ENCODE measurements at regions of chr19 and their contacts with region 1.

Region 1: GRCh38 chr19:57559404-57560025 is at the start of gene ZNF550:
- DNase-seq: peak; percentile 96
- ATAC-seq: peak; percentile 99
- total RNA-seq, gene ZNF550: 9.5 TPM

Region 2: GRCh38 chr19:57406516-57407123 is 152.9 kb before region 1 on chr19:
- intact Hi-C with region 1: no loop called
- DNase-seq: peak; percentile 79
- ATAC-seq: peak; percentile 51

Region 3: DNA sequence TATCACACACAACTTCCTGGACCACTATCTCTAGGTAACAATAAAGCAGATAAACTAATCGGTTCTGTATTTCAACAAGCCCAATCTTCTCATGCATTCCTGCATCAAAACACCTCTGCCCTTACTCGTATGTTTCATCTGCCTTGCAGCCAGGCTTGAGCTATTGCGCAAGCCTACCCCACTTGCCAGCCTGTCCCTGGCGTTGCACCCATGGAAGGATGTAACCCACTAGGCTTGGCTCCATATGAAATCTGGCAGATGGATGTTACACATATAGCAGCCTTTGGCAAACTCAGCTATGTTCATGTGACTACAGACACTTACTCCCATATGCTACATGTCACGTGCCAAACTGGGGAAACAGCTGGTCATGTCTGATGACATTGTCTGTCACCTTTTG is 44.3 kb before region 1 on chr19:
- intact Hi-C with region 1: no loop called
- DNase-seq: no peak
- ATAC-seq: no peak

Region 4: GRCh38 chr19:57527136-57527881 is 32.2 kb before region 1 on chr19 and contains the start of gene ZNF549:
- intact Hi-C with region 1: loop called (anchors 5 kb)
- DNase-seq: peak; percentile 91
- ATAC-seq: peak; percentile 100
- total RNA-seq, gene ZNF549: 3.6 TPM

Region 5: DNA sequence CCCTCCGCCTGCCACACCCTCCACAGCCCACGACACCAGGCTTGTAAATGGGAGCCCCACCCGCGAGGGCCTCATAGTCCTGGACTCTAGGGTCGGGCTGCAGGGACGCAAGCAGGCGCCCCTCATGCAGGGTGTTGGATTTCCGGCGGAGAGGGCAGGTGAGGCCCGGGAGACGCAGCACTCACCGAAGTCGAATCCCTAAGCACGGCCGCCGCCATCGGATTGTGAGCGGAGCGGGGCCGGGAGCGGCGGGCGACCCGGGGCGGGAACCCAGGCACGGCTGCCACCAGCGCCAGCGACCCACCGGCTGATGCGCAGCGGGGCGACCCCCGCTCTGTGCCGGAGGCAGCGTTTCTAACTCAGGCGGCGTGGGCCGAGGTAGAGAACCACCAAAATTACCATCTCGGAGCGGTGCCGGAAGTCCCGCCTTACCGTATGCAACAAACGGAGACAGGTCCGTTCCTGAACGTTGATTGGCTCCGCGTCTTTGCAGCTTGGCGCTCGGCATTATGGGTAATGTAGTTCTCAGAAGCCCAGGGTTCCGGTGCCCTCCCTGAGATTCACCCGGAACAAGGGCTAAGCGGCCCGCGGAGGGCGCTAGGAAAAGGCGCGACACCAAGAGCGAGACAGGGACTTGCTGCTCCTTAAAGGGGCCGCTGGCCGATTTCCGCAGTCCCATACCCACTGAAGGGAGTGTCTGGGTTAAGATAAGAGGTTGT is 19.1 kb after region 1 on chr19 and contains the start of gene ZNF416:
- intact Hi-C with region 1: loop called (anchors 2 kb)
- DNase-seq: peak; percentile 98
- ATAC-seq: peak; percentile 98
- total RNA-seq, gene ZNF416: 4.3 TPM